Heart right ventricle (tissue), 16 donors: ENCODE measurements at regions of chr14 and their contacts with region 1.

Region 1: GRCh38 chr14:26872515-26873361 is 274.9 kb upstream of the NOVA1 start:
- DNase-seq: peak in 1 of 2 donors; percentile 47
- ATAC-seq: peak; percentile 55 to 98 (median 96)
- H3K4me3 ChIP-seq: no peak overlapping the region
- H3K27ac ChIP-seq: peak overlapping the region in 3 of 10 donors; percentile 33 to 59 (median 41)
- H3K4me1 ChIP-seq: peaks cover 0 to 21% (median 0%) of the 10 kb centered on the region in 9 donors
- H3K27me3 ChIP-seq: no peaks in the 10 kb centered on the region
- CTCF ChIP-seq: no peak

Region 2: DNA sequence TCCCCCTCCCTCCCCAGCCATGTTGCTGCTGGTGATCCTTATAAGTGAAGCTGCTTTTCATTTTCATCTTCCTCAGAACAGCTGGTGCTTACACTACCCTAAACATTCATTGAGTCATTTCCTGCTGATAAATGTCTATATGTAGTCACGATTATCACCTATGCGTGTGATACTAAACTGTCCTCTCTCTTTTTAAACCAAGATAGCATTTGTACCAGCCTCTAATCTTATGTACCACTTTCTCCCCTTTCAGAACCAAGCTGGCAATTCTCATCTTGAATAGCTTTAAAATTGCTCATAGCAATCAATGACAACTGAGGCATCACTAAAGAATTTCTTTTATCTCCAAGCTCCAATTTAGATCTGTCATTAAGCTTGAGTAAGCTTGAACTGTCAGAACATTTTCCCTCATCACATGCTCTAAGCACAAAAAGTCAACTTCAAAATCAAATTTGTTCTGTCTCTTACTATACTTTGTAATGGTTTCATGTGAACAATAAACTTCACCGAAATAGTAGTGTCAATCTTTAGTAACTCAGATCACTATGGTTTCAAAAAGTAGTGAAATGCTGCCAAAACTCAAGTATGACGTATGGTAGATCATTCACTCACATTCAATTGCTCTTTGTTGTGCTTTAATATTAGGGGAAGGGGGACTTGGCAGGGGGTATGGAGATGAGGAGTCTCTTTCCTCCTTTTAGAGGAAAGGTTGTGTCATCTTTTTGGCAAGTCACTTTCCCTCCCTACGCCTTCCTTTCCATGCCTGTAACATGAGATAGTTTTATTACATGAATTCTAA is 96.8 kb before region 1 on chr14:
- intact Hi-C with region 1: no loop called
- DNase-seq: no peak
- ATAC-seq: peak in 3 of 8 donors; percentile 9 to 71 (median 65)
- H3K4me3 ChIP-seq: no peak overlapping the region
- H3K27ac ChIP-seq: peak overlapping the region in 1 of 10 donors; percentile 17
- H3K4me1 ChIP-seq: peaks cover 0 to 10% (median 0%) of the 10 kb centered on the region in 9 donors
- H3K27me3 ChIP-seq: no peaks in the 10 kb centered on the region
- CTCF ChIP-seq: no peak

Region 3: DNA sequence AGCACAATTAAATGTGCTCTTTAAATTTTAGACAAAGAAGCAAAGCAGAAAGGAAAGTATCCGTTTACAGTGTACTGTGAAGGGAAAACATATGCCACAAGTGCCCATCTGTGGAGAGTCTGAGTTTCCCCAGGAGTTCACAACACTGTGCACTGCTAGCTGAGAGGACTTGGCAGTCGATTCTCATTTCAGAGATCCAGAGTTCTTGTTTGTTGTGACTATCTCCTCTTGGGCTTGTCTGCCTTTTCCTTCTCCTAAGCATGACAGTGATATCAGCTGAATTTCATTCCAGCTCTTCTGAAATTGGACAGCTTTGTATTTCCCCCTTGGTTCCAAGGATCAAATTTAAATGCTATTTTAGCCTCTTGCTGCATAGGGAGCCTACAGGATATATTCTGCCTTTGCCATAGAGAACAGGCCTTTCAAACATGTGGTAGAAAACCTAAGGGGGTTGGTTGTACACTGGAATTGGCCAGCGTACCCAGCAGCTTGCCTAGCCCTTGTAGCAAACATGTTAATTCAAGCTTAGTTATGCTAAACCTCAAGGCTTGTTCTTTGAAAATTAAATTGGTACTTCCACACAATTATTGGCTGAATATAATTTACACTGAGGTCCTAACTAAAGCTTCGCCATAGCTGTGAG is 15.7 kb before region 1 on chr14:
- intact Hi-C with region 1: loop called in 1 of 10 experiments (anchors 2 kb)
- DNase-seq: no peak
- ATAC-seq: peak; percentile 64 to 88 (median 84)
- H3K4me3 ChIP-seq: no peak overlapping the region
- H3K27ac ChIP-seq: peak overlapping the region in 7 of 10 donors; percentile 26 to 75 (median 55)
- H3K4me1 ChIP-seq: peaks cover 0 to 15% (median 5%) of the 10 kb centered on the region in 9 donors
- H3K27me3 ChIP-seq: no peaks in the 10 kb centered on the region
- CTCF ChIP-seq: no peak

Region 4: GRCh38 chr14:27050190-27050589 is 177.5 kb after region 1 on chr14:
- intact Hi-C with region 1: no loop called
- DNase-seq: no peak
- ATAC-seq: no peak
- H3K4me3 ChIP-seq: no peak overlapping the region
- H3K27ac ChIP-seq: no peak overlapping the region
- H3K4me1 ChIP-seq: no peaks in the 10 kb centered on the region
- H3K27me3 ChIP-seq: no peaks in the 10 kb centered on the region
- CTCF ChIP-seq: no peak